ENCODE measurements at regions of chr15 and their contacts with region 1.

Region 1: DNA sequence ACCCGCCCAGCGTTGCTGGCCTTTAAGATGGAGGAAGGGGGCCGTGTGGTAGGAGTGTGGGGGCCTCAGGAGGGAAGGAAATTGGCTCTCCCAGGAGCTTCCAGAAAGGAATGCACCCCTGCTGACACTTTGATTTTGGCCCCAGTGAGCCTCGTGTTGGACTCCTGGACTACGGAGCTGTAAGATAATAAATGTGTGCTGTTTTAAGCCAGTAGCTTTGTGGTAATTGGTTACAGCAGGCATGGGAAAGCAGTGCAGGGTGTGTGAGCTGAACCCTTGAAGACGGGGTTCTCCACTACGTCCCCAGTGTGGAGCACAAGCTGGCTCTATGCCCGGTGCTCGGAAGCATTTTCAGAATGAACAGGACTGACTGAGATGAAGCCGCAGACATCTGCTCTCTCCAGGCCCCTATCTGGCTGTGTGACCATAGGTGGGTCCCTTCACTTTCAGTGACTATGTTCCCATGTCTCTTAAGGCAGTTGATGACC is 22.9 kb upstream of the CGNL1 start:
- DNase-seq: no peak
- ATAC-seq: no peak
- H3K4me3 ChIP-seq: no peak overlapping the region
- H3K27ac ChIP-seq: no peak overlapping the region
- H3K4me1 ChIP-seq: no peaks in the 10 kb centered on the region
- H3K27me3 ChIP-seq: no peaks in the 10 kb centered on the region
- CTCF ChIP-seq: no peak

Region 2: DNA sequence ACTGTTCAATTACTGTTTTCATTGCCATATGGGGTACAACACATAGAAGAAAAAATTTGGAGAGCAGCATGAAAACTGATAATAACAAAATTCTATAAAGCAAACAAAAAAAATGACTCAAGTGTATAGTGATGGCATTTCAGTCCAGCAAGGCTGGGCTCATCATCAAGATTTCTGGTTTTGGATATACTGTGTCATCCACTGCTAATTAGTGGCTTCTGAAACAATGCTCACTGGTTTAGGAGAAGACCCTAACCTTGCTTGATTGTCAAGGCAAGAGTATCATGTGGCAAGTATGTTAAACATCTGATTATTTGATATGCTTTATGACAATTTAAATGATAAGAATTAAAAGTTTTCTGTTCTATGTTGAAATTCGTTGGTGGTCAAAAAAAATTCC is 1206.6 kb before region 1 on chr15:
- intact Hi-C with region 1: no loop called
- DNase-seq: no peak
- ATAC-seq: no peak
- H3K4me3 ChIP-seq: no peak overlapping the region
- H3K27ac ChIP-seq: no peak overlapping the region
- H3K4me1 ChIP-seq: no peaks in the 10 kb centered on the region
- H3K27me3 ChIP-seq: no peaks in the 10 kb centered on the region
- CTCF ChIP-seq: no peak

Region 3: DNA sequence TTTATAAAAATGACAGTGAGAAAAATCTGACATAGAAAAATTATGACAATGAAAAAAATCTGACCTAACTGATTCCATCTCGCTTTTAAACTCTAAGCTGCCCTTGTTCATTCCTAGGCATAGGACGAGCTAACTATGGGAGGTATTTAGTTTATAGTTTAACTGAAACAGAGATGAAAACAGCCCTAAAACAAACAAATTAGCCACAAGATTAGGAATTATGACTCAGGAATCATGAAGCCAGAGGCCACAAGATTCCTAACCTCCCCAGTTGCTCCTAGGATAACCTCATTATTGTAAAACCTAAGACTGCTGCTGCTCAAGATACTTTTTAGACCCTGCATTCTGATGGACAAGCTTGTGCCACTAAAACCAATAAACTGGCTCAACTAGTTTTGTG is 765.7 kb before region 1 on chr15:
- intact Hi-C with region 1: no loop called
- DNase-seq: no peak
- ATAC-seq: no peak
- H3K4me3 ChIP-seq: no peak overlapping the region
- H3K27ac ChIP-seq: no peak overlapping the region
- H3K4me1 ChIP-seq: no peaks in the 10 kb centered on the region
- H3K27me3 ChIP-seq: no peaks in the 10 kb centered on the region
- CTCF ChIP-seq: no peak

Region 4: DNA sequence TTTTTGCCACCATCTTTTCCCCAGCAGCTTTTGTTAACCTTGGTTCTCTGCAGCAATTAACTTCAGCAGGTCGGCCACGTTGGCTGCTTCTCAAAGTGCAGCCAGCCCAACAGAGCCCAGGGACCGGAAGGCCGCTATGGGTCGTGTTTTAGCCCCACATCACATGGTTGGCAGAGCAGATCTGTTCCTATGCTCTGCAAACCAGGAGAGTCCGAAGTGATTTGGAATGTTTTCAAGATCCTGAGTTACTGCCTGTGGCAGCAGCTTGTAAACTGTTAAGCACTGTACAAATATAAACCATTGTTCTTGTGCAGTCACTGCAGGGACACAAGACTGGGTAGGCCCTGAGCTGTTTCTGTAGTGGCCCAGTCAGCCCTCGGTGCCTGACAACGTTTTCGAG is 168.8 kb after region 1 on chr15:
- intact Hi-C with region 1: loop called in 1 of 3 experiments (anchors 5 kb)
- DNase-seq: peak in 1 of 6 donors; percentile 54
- ATAC-seq: peak; percentile 21 to 82 (median 50)
- H3K4me3 ChIP-seq: no peak overlapping the region
- H3K27ac ChIP-seq: peak overlapping the region in 2 of 4 donors; percentile 13 to 16
- H3K4me1 ChIP-seq: peaks cover 11 to 26% (median 15%) of the 10 kb centered on the region in 3 donors
- H3K27me3 ChIP-seq: no peaks in the 10 kb centered on the region
- CTCF ChIP-seq: no peak